ENCODE measurements at regions of chr14 and their contacts with region 1.

Region 1: GRCh38 chr14:58637391-58638230 is at the start of gene DACT1:
- DNase-seq: peak; percentile 80
- ATAC-seq: peak; percentile 69
- H3K4me3 Mint-ChIP-seq: peak within 1 kb of the TSS; percentile 76
- H3K27ac Mint-ChIP-seq: peak within 1 kb of the TSS; percentile 85
- H3K4me1 Mint-ChIP-seq: peaks cover 41% of the 10 kb centered on the region
- H3K27me3 Mint-ChIP-seq: peaks cover 12% of the 10 kb centered on the region
- total RNA-seq, gene DACT1: 8.8 to 8.9 TPM

Region 2: GRCh38 chr14:58501214-58501816 is 136.3 kb before region 1 on chr14:
- CTCF ChIA-PET with region 1: interaction called, 40 read pairs
- POLR2A ChIA-PET with region 1: no interaction called
- intact Hi-C with region 1: loop called (anchors 1 to 2 kb)
- DNase-seq: peak; percentile 33
- ATAC-seq: peak; percentile 64
- H3K4me3 Mint-ChIP-seq: no peak overlapping the region
- H3K27ac Mint-ChIP-seq: no peak overlapping the region
- H3K4me1 Mint-ChIP-seq: no peaks in the 10 kb centered on the region
- H3K27me3 Mint-ChIP-seq: no peaks in the 10 kb centered on the region

Region 3: GRCh38 chr14:58598028-58598803 is 39.4 kb before region 1 on chr14:
- CTCF ChIA-PET with region 1: no interaction called
- POLR2A ChIA-PET with region 1: interaction called, 3 read pairs
- intact Hi-C with region 1: loop called in 1 of 2 experiments (anchors 1 kb)
- DNase-seq: no peak
- ATAC-seq: peak; percentile 86
- H3K4me3 Mint-ChIP-seq: no peak overlapping the region
- H3K27ac Mint-ChIP-seq: peak overlapping the region; percentile 31
- H3K4me1 Mint-ChIP-seq: peaks cover 34% of the 10 kb centered on the region
- H3K27me3 Mint-ChIP-seq: peaks cover 9% of the 10 kb centered on the region

Region 4: GRCh38 chr14:58690801-58691516 is 53.3 kb after region 1 on chr14:
- CTCF ChIA-PET with region 1: no interaction called
- POLR2A ChIA-PET with region 1: no interaction called
- intact Hi-C with region 1: no loop called
- DNase-seq: no peak
- ATAC-seq: no peak
- H3K4me3 Mint-ChIP-seq: no peak overlapping the region
- H3K27ac Mint-ChIP-seq: no peak overlapping the region
- H3K4me1 Mint-ChIP-seq: no peaks in the 10 kb centered on the region
- H3K27me3 Mint-ChIP-seq: no peaks in the 10 kb centered on the region

Region 5: DNA sequence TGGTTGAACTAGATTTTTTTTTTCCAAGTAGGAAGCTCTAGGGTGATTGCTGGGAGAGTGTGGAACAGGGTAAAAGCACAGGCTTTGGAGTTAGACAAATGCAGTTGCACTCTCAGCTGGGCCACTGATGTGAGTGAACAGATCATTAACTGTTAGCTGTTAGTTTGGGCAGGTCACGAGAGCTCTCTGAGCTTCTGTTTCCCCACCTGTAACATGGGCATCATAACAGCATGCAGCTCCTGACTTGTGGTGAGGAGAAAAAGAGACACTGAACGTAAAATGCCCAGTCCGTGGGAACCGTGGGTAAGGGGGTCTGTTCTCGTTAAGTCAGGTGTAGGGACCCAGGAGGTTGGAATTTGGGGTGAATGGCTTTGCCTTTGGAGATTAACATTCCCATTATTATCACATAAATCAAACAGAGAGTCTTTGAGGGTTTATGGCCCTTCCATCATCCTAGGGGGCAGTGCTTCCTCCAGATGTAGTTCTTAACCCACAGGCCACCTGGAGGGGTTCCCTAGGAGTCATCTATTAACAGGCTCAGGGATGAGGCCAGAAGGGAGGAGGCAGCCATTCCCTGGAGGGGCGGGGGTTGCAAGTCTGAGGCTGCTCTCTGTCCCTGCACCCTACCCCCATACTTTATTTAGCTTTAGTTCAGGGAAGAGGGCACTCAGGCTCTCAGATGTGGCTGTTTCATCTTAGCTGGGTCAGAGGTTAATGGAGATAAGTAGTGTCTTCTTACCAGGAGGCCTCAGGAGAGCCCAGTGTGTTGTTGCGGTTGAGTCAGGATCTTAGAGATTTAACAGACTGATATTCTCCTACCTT is 135.4 kb after region 1 on chr14:
- CTCF ChIA-PET with region 1: no interaction called
- POLR2A ChIA-PET with region 1: no interaction called
- intact Hi-C with region 1: no loop called
- DNase-seq: no peak
- ATAC-seq: no peak
- H3K4me3 Mint-ChIP-seq: no peak overlapping the region
- H3K27ac Mint-ChIP-seq: no peak overlapping the region
- H3K4me1 Mint-ChIP-seq: no peaks in the 10 kb centered on the region
- H3K27me3 Mint-ChIP-seq: no peaks in the 10 kb centered on the region

Region 6: DNA sequence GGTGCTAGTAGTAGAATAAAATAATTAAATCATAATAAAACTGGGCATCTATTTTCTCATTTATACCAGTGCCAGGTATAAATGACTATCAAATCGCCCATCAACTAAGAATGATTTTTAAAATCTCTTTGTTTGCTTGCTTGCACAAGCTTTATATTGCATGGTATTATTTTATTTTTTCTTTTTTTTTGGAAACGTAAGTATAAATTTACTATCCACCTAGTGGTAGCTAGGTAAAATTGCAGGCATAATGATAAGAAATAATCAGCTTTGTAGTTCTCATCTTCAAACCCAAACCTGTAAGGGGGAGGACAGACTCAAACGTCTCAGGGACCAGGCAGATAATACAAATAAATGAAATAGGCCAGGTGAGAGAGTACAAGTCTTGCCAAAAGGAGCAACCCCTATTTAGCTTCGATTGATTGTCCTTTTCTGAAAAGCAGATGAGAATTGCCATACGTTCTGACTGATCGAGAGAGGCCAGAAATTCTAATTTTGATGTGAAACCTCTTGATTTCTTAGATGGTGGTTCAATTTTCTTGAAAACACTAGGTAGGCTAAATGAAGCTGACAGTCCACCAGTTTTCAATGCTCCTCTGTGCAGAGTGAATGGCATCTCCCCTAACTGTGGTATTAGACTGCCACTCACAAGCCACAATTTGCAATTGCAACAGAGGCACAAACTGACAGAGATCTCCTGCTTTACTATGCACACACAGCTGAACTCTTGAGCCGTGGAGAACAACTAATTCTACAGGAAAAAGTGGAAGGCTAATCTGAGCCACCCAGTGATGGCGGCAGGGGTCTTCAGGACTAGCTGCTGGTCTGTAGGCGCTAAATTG is 189.5 kb after region 1 on chr14:
- CTCF ChIA-PET with region 1: interaction called, 3 read pairs
- POLR2A ChIA-PET with region 1: no interaction called
- intact Hi-C with region 1: loop called in 1 of 2 experiments (anchors 5 kb)
- DNase-seq: no peak
- ATAC-seq: no peak
- H3K4me3 Mint-ChIP-seq: no peak overlapping the region
- H3K27ac Mint-ChIP-seq: no peak overlapping the region
- H3K4me1 Mint-ChIP-seq: no peaks in the 10 kb centered on the region
- H3K27me3 Mint-ChIP-seq: peaks cover 3% of the 10 kb centered on the region

Region 7: GRCh38 chr14:59055439-59056045 is 417.9 kb after region 1 on chr14:
- CTCF ChIA-PET with region 1: no interaction called
- POLR2A ChIA-PET with region 1: no interaction called
- intact Hi-C with region 1: loop called (anchors 5 to 10 kb)
- DNase-seq: peak; percentile 38
- ATAC-seq: peak; percentile 61
- H3K4me3 Mint-ChIP-seq: no peak overlapping the region
- H3K27ac Mint-ChIP-seq: no peak overlapping the region
- H3K4me1 Mint-ChIP-seq: no peaks in the 10 kb centered on the region
- H3K27me3 Mint-ChIP-seq: peaks cover 2% of the 10 kb centered on the region

Measured in activated CD4-positive, alpha-beta T cell treated with anti-CD3 and anti-CD28 coated beads for 36 hours (primary cell).